PC-9 (cell line): ENCODE measurements at regions of chr18 and their contacts with region 1.

Region 1: DNA sequence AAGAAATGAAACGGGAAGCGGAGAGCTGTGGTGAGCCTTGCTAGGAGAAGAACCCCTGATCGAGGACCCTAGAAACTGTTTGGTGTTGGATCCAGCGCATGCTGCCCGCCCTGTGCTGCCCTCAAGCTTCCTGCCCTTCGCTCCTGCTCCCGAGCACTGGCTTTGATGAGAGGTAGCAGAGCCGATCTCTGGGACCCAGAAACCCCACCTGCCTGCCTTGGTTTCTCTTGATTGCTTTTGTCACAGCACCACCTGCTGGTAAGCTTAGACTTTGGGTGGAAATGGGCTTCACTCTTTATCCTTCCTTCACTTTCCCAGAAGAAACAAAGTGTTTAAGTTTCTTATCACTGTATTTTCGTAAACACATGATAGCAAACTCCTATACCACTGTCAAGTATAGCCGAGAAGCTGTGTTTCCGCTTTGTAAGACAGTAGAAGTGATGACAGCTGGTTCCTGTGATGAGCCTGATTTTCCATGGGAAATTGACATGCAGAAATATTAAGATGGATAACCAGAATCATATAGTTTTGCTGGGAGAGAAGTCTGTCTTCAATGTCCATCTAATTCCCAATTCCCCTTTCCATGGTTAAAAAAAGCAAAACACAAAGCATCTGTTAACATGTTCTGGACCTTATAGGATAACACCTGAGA is 267.4 kb downstream of the PHLPP1 start:
- DNase-seq: peak in 1 of 2 experiments; percentile 36
- H3K4me3 ChIP-seq: no peak overlapping the region
- H3K27ac ChIP-seq: no peak overlapping the region
- H3K4me1 ChIP-seq: peaks cover 7% of the 10 kb centered on the region
- H3K27me3 ChIP-seq: no peaks in the 10 kb centered on the region
- CTCF ChIP-seq: peak; percentile 90

Region 2: GRCh38 chr18:62209046-62209445 is 773.7 kb before region 1 on chr18:
- CTCF ChIA-PET with region 1: interaction called, 11 read pairs
- POLR2A ChIA-PET with region 1: no interaction called
- intact Hi-C with region 1: no loop called
- DNase-seq: no peak
- H3K4me3 ChIP-seq: no peak overlapping the region
- H3K27ac ChIP-seq: no peak overlapping the region
- H3K4me1 ChIP-seq: no peaks in the 10 kb centered on the region
- H3K27me3 ChIP-seq: no peaks in the 10 kb centered on the region
- CTCF ChIP-seq: no peak

Region 3: DNA sequence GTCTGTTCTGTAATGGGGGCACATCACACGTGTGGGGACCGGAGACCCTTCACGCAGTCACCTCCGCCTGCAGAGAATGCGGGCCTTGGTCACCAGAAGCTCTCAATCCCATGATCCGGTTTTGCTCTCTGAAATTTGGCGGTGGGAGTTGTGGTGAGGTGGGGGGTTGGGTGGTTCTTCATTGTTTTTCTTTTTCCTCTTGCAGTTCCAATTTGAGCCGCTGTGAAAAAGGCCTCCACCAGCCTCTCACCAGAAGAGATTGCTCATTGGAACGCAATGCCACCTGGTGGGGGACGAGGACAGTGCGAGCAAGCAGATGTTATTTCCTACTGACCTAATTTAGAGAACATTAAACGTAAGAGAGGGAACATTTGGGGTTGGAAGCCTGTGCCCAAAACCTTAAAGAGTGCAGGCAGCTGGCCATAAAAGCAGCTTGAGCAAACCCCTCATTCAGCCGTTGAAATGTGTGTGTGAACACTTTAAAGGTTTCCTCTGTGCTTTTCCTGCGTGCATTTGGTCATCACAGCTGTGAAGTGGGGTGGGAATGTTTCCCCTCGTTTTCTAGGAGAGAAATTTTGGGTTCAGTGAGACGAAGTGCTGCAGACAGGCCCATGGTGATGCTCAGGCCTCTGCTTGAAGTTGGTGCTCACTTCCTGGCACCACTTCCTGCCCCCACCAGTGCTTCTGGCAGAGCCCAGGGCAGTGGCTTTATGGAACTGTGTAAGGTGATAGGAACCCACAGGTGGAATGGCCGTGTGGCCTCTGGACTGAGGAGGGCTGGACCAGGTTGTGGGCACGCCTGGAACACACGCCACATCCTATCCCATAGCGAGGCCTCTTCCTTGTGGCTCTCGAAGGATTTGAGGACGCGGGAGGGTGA is 398.2 kb before region 1 on chr18:
- CTCF ChIA-PET with region 1: interaction called, 7 read pairs
- POLR2A ChIA-PET with region 1: no interaction called
- intact Hi-C with region 1: loop called (anchors 1 kb)
- DNase-seq: peak; percentile 68 to 75
- H3K4me3 ChIP-seq: no peak overlapping the region
- H3K27ac ChIP-seq: no peak overlapping the region
- H3K4me1 ChIP-seq: no peaks in the 10 kb centered on the region
- H3K27me3 ChIP-seq: no peaks in the 10 kb centered on the region
- CTCF ChIP-seq: peak; percentile 93

Region 4: GRCh38 chr18:63098018-63098981 is 115.6 kb after region 1 on chr18:
- CTCF ChIA-PET with region 1: no interaction called
- POLR2A ChIA-PET with region 1: no interaction called
- intact Hi-C with region 1: no loop called
- DNase-seq: no peak
- H3K4me3 ChIP-seq: no peak overlapping the region
- H3K27ac ChIP-seq: no peak overlapping the region
- H3K4me1 ChIP-seq: no peaks in the 10 kb centered on the region
- H3K27me3 ChIP-seq: no peaks in the 10 kb centered on the region
- CTCF ChIP-seq: no peak